ENCODE measurements at regions of chr11 and their contacts with region 1.

Region 1: GRCh38 chr11:128831174-128832120 is 35.6 kb downstream of the KCNJ1 start:
- DNase-seq: peak; percentile 89
- ATAC-seq: peak; percentile 89
- H3K4me3 Mint-ChIP-seq: no peak overlapping the region
- H3K27ac Mint-ChIP-seq: no peak overlapping the region
- H3K4me1 Mint-ChIP-seq: peaks cover 25% of the 10 kb centered on the region
- H3K27me3 Mint-ChIP-seq: no peaks in the 10 kb centered on the region
- CTCF ChIP-seq: peak; percentile 94

Region 2: GRCh38 chr11:128686745-128687177 is 144.7 kb before region 1 on chr11:
- CTCF ChIA-PET with region 1: interaction called, 35 read pairs
- POLR2A ChIA-PET with region 1: no interaction called
- DNase-seq: peak; percentile 60
- ATAC-seq: peak; percentile 20
- H3K4me3 Mint-ChIP-seq: peak overlapping the region; percentile 77
- H3K27ac Mint-ChIP-seq: no peak overlapping the region
- H3K4me1 Mint-ChIP-seq: peaks cover 72% of the 10 kb centered on the region
- H3K27me3 Mint-ChIP-seq: peaks cover 100% of the 10 kb centered on the region
- CTCF ChIP-seq: no peak

Region 3: GRCh38 chr11:128776424-128777284 is 54.8 kb before region 1 on chr11:
- CTCF ChIA-PET with region 1: interaction called, 40 read pairs
- POLR2A ChIA-PET with region 1: interaction called, 3 read pairs
- DNase-seq: peak; percentile 82
- ATAC-seq: peak; percentile 85
- H3K4me3 Mint-ChIP-seq: peak overlapping the region; percentile 35
- H3K27ac Mint-ChIP-seq: no peak overlapping the region
- H3K4me1 Mint-ChIP-seq: peaks cover 41% of the 10 kb centered on the region
- H3K27me3 Mint-ChIP-seq: peaks cover 20% of the 10 kb centered on the region
- CTCF ChIP-seq: peak; percentile 43

Region 4: DNA sequence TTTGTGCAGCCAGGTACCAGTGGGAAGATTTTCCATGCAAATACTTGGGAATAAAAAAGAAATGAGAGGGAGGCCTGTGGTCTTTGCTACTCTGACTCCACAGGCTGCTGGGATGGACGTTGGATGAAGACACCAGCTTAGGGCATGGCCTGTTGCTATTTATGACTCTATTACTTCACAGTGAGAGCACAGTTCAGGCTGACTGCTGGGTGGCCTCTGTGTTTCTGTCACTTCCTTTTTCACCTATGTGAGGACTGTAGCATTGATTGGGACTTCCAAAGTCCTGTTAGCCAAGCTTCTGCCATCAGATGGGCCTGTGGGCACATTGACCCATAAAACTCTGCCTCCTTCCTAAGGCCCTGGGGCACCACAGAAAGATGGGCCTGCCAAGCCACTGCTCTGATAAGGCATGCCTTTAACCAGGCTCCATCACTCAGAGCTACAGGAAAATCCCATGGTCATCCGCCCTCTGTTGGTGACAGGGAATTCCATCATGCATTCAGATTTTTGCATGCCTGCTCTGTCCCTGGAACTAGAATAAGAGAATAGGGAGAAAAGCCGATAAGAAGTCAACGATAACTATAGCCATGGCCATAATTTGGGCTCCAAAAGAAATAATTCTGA is 29.0 kb before region 1 on chr11:
- CTCF ChIA-PET with region 1: interaction called, 16 read pairs
- POLR2A ChIA-PET with region 1: no interaction called
- DNase-seq: peak; percentile 56
- ATAC-seq: peak; percentile 88
- H3K4me3 Mint-ChIP-seq: no peak overlapping the region
- H3K27ac Mint-ChIP-seq: no peak overlapping the region
- H3K4me1 Mint-ChIP-seq: peaks cover 16% of the 10 kb centered on the region
- H3K27me3 Mint-ChIP-seq: peaks cover 3% of the 10 kb centered on the region; the same call in 1 of the 2 replicates
- CTCF ChIP-seq: peak; percentile 38

Region 5: GRCh38 chr11:128871168-128871610 is 39.7 kb after region 1 on chr11:
- CTCF ChIA-PET with region 1: interaction called, 10 read pairs
- POLR2A ChIA-PET with region 1: no interaction called
- DNase-seq: no peak
- ATAC-seq: peak; percentile 71
- H3K4me3 Mint-ChIP-seq: peak overlapping the region; percentile 37
- H3K27ac Mint-ChIP-seq: peak overlapping the region; percentile 39
- H3K4me1 Mint-ChIP-seq: peaks cover 43% of the 10 kb centered on the region
- H3K27me3 Mint-ChIP-seq: peaks cover 41% of the 10 kb centered on the region
- CTCF ChIP-seq: no peak

Measured in WTC11 (cell line).